GM10248 (cell line): ENCODE measurements at regions of chr15 and their contacts with region 1.

Region 1: DNA sequence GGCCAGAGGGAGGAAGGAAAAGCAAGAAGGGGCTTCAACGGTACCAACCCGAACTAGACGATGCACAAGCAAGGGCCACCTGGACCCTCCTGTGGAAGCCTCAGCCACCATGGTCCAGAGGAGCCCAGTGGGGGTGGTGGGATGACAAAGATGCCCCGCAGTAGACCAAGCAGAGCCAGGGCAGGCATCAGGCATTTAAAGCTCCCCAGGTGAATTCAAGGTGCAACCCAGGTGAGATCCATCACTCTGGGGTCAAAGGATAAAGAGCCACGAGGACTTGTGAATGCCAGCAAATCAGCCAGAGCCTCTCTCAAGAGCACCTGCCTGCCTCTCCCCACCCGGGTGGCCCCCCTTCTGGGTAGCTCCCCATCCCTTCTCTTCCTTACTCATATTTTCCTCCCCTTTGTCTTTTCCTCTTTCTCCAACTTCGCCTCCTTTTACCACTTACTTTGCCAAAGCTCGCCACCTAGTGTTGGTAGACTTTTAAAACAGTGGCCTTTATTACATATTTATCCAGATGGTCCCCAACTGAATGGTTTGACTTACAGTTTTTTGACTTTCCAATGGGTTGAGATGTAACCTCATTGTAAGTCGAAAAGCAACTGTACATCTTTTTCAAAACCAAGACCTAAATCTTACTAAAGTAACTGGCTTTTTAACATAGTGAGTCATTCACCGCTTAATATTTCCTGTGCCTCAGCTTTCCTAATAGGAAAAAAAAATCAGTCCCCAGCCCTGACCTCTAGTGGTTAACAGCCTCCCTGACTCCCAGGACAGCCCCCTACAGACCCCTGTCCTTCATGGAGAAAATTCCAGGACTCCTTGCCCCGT is 18.8 kb downstream of the PLA2G4F start:
- DNase-seq: peak; percentile 67
- CTCF ChIP-seq: peak; percentile 57

Region 2: GRCh38 chr15:41917767-41918430 is 219.7 kb before region 1 on chr15:
- CTCF ChIA-PET with region 1: no interaction called
- POLR2A ChIA-PET with region 1: no interaction called
- DNase-seq: no peak
- CTCF ChIP-seq: no peak

Region 3: DNA sequence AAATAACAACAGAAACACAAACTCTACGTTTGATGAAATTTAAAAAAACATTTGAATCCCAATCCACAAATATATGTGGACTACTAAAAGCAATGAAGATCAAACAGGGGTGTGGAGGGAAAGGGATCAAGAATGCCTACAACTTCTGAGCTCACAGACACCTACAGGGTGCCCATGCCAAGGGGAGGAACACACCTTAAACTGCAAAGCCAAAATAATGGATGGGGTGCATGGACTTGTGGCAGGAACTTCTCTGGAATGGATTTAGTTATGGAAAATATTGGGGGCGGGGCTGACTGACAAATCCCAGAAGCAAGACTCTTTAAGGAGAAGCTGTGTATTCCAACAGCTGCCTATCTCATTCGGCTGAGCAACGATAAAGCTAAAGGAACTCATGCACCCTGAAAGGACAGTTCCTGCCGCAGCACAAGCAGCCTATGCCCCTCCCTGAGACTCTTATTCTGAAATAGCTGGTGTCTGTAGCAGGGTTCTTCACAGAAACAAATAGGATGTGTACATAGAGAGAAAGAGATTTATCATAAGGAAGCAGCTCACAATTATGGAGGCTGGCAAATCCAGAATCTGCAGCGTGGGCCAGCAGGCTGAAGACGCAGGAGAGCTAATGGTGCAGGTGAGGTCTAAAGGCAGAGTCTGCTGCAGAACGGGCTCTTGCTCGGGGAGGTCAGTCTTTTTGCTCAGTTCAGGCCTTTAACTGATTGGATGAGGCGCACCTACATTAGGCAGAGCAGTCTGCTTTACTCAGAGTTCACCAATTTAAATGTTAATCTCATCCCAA is 18.8 kb before region 1 on chr15:
- CTCF ChIA-PET with region 1: interaction called, 20 read pairs
- POLR2A ChIA-PET with region 1: no interaction called
- DNase-seq: no peak
- CTCF ChIP-seq: no peak

Region 4: GRCh38 chr15:42149493-42150218 is 12.0 kb after region 1 on chr15:
- CTCF ChIA-PET with region 1: interaction called, 11 read pairs
- POLR2A ChIA-PET with region 1: no interaction called
- DNase-seq: no peak
- CTCF ChIP-seq: no peak